Caco-2 (cell line): ENCODE measurements at regions of chr2 and their contacts with region 1.

Region 1: GRCh38 chr2:43576981-43577892 is 18.6 kb downstream of the THADA start:
- DNase-seq: peak in 1 of 2 experiments; percentile 35
- H3K4me3 ChIP-seq: no peak overlapping the region
- H3K4me3 Mint-ChIP-seq: no peak overlapping the region
- H3K27ac Mint-ChIP-seq: no peak overlapping the region
- H3K4me1 ChIP-seq: no peaks in the 10 kb centered on the region
- H3K4me1 Mint-ChIP-seq: no peaks in the 10 kb centered on the region
- H3K27me3 ChIP-seq: no peaks in the 10 kb centered on the region
- H3K27me3 Mint-ChIP-seq: no peaks in the 10 kb centered on the region
- CTCF ChIP-seq: peak; percentile 78 to 82

Region 2: GRCh38 chr2:43312755-43313641 is 264.2 kb before region 1 on chr2:
- CTCF ChIA-PET with region 1: no interaction called
- POLR2A ChIA-PET with region 1: no interaction called
- intact Hi-C with region 1: no loop called
- DNase-seq: no peak
- H3K4me3 ChIP-seq: no peak overlapping the region
- H3K4me3 Mint-ChIP-seq: no peak overlapping the region
- H3K27ac Mint-ChIP-seq: no peak overlapping the region
- H3K4me1 ChIP-seq: no peaks in the 10 kb centered on the region
- H3K4me1 Mint-ChIP-seq: no peaks in the 10 kb centered on the region
- H3K27me3 ChIP-seq: no peaks in the 10 kb centered on the region
- H3K27me3 Mint-ChIP-seq: no peaks in the 10 kb centered on the region
- CTCF ChIP-seq: no peak

Region 3: GRCh38 chr2:43519643-43520221 is 57.5 kb before region 1 on chr2:
- CTCF ChIA-PET with region 1: no interaction called
- POLR2A ChIA-PET with region 1: no interaction called
- intact Hi-C with region 1: no loop called
- DNase-seq: no peak
- H3K4me3 ChIP-seq: no peak overlapping the region
- H3K4me3 Mint-ChIP-seq: no peak overlapping the region
- H3K27ac Mint-ChIP-seq: no peak overlapping the region
- H3K4me1 ChIP-seq: no peaks in the 10 kb centered on the region
- H3K4me1 Mint-ChIP-seq: no peaks in the 10 kb centered on the region
- H3K27me3 ChIP-seq: no peaks in the 10 kb centered on the region
- H3K27me3 Mint-ChIP-seq: no peaks in the 10 kb centered on the region
- CTCF ChIP-seq: no peak

Region 4: GRCh38 chr2:43553341-43553855 is 23.8 kb before region 1 on chr2:
- CTCF ChIA-PET with region 1: interaction called, 10 read pairs
- POLR2A ChIA-PET with region 1: no interaction called
- intact Hi-C with region 1: no loop called
- DNase-seq: no peak
- H3K4me3 ChIP-seq: no peak overlapping the region
- H3K4me3 Mint-ChIP-seq: no peak overlapping the region
- H3K27ac Mint-ChIP-seq: no peak overlapping the region
- H3K4me1 ChIP-seq: peaks cover 17% of the 10 kb centered on the region
- H3K4me1 Mint-ChIP-seq: peaks cover 5% of the 10 kb centered on the region
- H3K27me3 ChIP-seq: no peaks in the 10 kb centered on the region
- H3K27me3 Mint-ChIP-seq: no peaks in the 10 kb centered on the region
- CTCF ChIP-seq: no peak